Activated CD4-positive, alpha-beta memory T cell treated with anti-CD3 and anti-CD28 coated beads, Interleukin-2, amount 10 ng/mL, durations not matched to agents 7 days and 5 days (primary cell): ENCODE measurements at regions of chr4 and their contacts with region 1.

Region 1: GRCh38 chr4:102430461-102430910 is 70.7 kb upstream of the NFKB1 start:
- DNase-seq: no peak
- H3K4me3 Mint-ChIP-seq: peak overlapping the region; percentile 79
- H3K27ac Mint-ChIP-seq: peak overlapping the region; percentile 83
- H3K4me1 Mint-ChIP-seq: peaks cover 19% of the 10 kb centered on the region
- H3K27me3 Mint-ChIP-seq: peaks cover 14% of the 10 kb centered on the region

Region 2: DNA sequence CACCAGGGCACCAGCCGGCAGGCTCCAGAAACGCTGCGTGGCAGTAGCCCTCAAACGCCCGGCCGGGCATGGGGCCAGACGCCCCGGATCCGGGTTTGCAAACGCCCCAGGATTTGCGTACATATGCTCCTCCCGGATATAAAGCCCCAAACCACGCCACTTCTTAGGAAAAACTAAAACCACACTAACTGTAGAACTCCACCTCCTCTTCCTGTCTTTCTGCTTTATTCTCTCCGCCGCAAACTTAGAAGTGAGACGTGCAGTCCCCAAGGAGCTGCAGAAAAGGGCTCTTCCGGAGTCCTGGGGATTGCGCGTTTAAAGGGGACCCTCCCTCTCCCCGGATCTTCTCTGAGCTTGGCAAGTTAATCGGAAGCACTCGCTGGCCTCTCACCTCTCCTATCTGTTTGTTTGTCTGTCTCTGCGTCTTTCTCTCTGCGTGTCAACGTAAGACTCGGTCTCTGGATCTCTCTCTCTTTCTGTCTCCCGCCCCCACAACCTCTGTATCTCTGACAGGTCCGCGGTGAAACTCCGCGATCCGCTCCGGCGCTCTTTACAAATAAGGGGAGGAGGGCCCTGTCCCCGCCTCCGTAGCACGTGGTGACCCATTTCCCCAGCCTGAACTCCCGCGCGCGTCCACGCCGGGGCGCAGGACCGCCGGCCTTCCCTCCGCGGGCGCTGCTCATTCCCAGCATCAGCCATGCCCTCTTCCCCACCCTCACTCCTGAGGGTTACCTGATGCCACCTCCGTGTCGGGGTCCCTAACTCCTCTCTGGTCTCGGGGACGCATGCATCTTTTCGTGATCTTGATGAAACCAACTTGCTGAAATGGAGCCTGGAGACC is 85.3 kb before region 1 on chr4 and contains the start of gene SLC39A8:
- CTCF ChIA-PET with region 1: interaction called, 39 read pairs
- POLR2A ChIA-PET with region 1: interaction called, 23 read pairs
- DNase-seq: peak; percentile 91
- H3K4me3 Mint-ChIP-seq: peak within 1 kb of the TSS; percentile 78
- H3K27ac Mint-ChIP-seq: peak within 1 kb of the TSS; percentile 92
- H3K4me1 Mint-ChIP-seq: peaks cover 44% of the 10 kb centered on the region
- H3K27me3 Mint-ChIP-seq: peaks cover 7% of the 10 kb centered on the region
- total RNA-seq, gene SLC39A8: 101 to 103 TPM

Region 3: DNA sequence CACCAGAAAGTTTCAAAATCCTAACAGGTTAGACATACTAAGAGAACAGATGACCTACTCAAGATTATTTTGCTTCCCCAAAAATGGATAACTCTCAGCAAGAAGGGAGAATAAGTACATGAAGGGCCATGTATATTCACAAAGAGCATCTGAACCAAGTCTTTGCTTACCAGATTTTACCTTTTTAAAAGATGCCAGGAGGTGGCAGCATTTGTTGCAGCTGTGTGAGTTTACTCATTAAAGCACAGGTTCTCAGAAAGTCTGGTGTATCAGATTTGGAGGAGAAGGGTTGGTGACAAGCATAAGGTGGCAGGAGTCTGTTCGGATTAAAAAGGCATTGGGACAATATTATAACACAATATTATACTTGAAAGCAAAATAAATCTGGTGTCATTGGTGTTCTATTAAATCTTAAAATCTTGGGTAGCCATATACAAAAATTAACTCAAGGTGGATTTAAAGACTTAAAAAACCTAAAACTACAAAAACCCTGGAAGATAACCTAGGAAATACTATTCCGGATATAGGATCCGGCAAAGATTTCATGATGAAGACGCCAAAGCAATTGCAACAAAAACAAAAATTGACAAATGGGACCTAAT is 19.4 kb after region 1 on chr4:
- CTCF ChIA-PET with region 1: interaction called, 19 read pairs
- POLR2A ChIA-PET with region 1: interaction called, 5 read pairs
- DNase-seq: peak; percentile 60
- H3K4me3 Mint-ChIP-seq: no peak overlapping the region
- H3K27ac Mint-ChIP-seq: no peak overlapping the region
- H3K4me1 Mint-ChIP-seq: peaks cover 41% of the 10 kb centered on the region
- H3K27me3 Mint-ChIP-seq: no peaks in the 10 kb centered on the region

Region 4: GRCh38 chr4:102525097-102525496 is 94.6 kb after region 1 on chr4:
- CTCF ChIA-PET with region 1: interaction called, 12 read pairs
- POLR2A ChIA-PET with region 1: no interaction called
- DNase-seq: no peak
- H3K4me3 Mint-ChIP-seq: no peak overlapping the region
- H3K27ac Mint-ChIP-seq: no peak overlapping the region
- H3K4me1 Mint-ChIP-seq: peaks cover 72% of the 10 kb centered on the region
- H3K27me3 Mint-ChIP-seq: no peaks in the 10 kb centered on the region

Region 5: DNA sequence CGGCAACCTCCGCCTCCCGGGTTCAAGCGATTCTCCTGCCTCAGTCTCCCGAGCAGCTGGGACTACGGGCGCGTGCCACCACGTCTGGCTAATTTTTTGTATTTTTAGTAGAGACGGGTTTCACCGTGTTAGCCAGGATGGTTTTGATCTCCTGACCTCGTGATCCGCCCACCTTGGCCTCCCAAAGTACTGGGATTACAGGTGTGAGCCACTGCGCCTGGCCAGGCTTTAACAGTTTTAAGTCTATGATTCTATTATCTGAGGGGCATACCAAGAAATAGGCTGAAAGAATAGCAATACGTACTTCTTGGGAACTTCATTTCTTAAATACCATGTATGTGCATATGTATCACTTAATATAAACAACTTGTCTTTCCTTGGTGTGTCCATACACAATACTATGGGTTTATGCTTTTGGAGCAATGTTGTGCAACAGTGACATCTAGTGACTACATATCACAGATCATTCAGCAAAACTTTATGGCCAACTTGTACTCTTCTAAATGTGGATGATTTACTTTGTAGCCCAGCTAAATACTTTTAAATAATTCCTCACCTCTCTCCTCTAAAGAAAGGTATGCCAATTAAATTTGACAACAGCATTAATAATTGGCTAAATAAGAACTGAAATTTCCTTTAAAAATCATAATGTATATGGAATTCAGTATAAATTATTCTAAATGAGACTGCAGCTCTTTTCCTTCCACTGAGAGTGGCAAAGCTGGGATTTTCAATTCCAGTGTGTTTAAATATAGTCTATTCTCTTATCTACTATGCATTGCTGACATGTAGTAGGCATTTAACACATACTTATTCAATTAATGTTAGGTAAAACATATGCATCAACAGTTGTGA is 578.6 kb after region 1 on chr4:
- CTCF ChIA-PET with region 1: interaction called, 10 read pairs
- POLR2A ChIA-PET with region 1: no interaction called
- DNase-seq: no peak
- H3K4me3 Mint-ChIP-seq: no peak overlapping the region
- H3K27ac Mint-ChIP-seq: no peak overlapping the region
- H3K4me1 Mint-ChIP-seq: peaks cover 3% of the 10 kb centered on the region
- H3K27me3 Mint-ChIP-seq: peaks cover 2% of the 10 kb centered on the region